ENCODE measurements at regions of chr19 and their contacts with region 1.

Region 1: GRCh38 chr19:44954824-44955586 is at the start of gene CLPTM1:
- DNase-seq: peak; percentile 96
- H3K4me3 Mint-ChIP-seq: peak within 1 kb of the TSS; percentile 96
- H3K27ac Mint-ChIP-seq: peak within 1 kb of the TSS; percentile 91
- H3K4me1 Mint-ChIP-seq: peaks cover 44% of the 10 kb centered on the region
- H3K27me3 Mint-ChIP-seq: no peaks in the 10 kb centered on the region
- total RNA-seq, gene CLPTM1: 66.9 to 68.6 TPM

Region 2: GRCh38 chr19:44903602-44904425 is 51.2 kb before region 1 on chr19:
- CTCF ChIA-PET with region 1: interaction called, 13 read pairs
- POLR2A ChIA-PET with region 1: no interaction called
- DNase-seq: peak; percentile 77
- H3K4me3 Mint-ChIP-seq: no peak overlapping the region
- H3K27ac Mint-ChIP-seq: no peak overlapping the region
- H3K4me1 Mint-ChIP-seq: peaks cover 12% of the 10 kb centered on the region
- H3K27me3 Mint-ChIP-seq: peaks cover 15% of the 10 kb centered on the region

Region 3: GRCh38 chr19:45001087-45001739 is 46.2 kb after region 1 on chr19 and contains the start of gene RELB:
- CTCF ChIA-PET with region 1: no interaction called
- POLR2A ChIA-PET with region 1: interaction called, 21 read pairs
- DNase-seq: peak; percentile 95
- H3K4me3 Mint-ChIP-seq: peak within 1 kb of the TSS; percentile 95
- H3K27ac Mint-ChIP-seq: peak within 1 kb of the TSS; percentile 99
- H3K4me1 Mint-ChIP-seq: peaks cover 26% of the 10 kb centered on the region
- H3K27me3 Mint-ChIP-seq: no peaks in the 10 kb centered on the region
- total RNA-seq, gene RELB: 32.6 to 33.5 TPM

Measured in activated CD4-positive, alpha-beta memory T cell treated with anti-CD3 and anti-CD28 coated beads, Interleukin-2, amount 10 ng/mL, durations not matched to agents 7 days and 5 days (primary cell).